Left cardiac atrium (tissue), 4 donors: ENCODE measurements at regions of chr10 and their contacts with region 1.

Region 1: DNA sequence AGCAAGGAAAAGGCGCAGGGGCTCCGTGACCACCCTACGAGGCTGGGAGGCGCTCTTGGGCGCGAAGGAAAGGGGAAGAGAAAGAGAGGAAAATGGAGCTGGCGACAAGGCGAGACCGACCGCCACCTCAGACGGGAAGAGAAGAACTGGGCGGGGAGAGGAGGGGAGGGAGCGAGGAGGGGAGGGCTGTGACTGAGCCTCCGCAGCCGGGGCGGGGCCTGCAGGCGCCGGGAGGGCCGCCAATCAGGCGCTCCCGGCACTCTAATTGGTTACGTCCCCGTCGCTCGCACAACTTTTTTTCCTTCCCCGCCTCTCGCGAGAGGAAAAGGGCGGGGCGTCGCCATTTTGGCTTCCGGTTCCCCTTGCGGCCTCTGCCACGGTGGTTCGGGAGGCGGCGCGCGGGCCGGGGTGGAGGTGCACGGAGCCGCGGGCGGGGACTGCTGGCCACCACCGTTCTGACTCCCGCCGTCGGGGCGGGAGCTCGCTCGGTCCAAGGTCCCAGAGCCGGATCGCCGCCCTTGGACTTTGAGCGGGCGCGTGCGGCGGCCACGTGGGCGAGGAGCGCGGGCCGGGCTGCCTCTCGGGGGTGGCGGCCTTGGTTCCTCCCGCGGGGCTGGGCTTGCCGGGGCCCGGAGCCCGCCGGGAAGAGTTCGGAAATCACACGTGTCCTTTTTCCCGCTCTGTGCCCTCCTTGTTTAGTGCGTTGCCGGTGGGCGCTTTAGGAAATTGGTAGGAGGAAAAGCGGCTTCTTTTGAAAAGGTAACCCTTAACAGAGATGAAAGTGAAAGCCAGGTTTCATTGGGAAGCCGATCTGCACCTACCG is at the start of gene GDI2:
- DNase-seq: peak; percentile 96
- ATAC-seq: peak; percentile 99
- total RNA-seq, gene GDI2: 107 to 120 TPM

Region 2: GRCh38 chr10:5684971-5685763 is 128.3 kb before region 1 on chr10:
- intact Hi-C with region 1: loop called in 1 of 2 experiments (anchors 5 kb)
- DNase-seq: peak; percentile 77
- ATAC-seq: peak; percentile 48 to 68

Region 3: DNA sequence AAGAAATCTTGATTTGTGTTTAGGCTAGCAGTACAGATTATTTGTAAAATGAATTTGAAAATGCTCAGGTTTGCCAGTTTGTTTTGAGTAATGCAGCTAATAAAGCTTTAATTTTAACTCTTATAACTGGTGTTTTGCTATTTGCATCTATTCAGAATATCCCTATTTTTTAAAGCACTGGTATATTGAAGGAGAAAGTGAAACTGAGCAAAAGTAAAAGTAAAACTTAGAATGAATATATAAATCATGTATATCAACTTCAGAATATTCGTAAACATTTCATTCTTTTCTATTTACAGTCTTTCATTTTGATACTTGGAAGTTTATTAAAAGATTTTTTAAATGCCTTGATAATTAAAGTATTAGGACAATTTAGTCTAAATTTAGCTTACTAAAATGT is 102.6 kb before region 1 on chr10:
- intact Hi-C with region 1: no loop called
- DNase-seq: no peak
- ATAC-seq: no peak

Region 4: DNA sequence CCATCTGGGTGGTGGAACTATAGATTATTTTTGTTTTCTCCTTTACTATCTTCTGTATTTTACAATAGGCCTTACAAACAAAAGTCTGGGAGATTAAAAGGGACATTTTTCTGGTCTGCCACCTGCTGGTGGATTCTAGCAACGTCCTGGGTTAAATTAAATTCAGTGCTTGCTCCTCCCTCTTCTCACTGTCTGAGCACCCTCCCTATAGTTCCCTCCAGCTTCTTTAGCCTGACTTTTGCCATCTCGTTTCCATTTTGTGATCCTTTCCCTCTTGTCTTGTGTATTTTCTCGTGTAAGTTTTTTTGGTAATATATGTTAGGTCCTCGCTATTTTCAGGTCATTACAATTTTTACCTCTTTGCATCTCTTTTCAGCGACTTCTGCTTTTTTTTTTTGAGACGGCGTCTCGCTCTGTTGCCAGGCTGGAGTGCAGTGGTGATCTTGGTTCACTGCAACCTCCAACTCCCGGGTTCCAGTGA is 60.1 kb after region 1 on chr10:
- intact Hi-C with region 1: loop called in 1 of 2 experiments (anchors 5 kb)
- DNase-seq: no peak
- ATAC-seq: peak; percentile 75 to 81

Region 5: DNA sequence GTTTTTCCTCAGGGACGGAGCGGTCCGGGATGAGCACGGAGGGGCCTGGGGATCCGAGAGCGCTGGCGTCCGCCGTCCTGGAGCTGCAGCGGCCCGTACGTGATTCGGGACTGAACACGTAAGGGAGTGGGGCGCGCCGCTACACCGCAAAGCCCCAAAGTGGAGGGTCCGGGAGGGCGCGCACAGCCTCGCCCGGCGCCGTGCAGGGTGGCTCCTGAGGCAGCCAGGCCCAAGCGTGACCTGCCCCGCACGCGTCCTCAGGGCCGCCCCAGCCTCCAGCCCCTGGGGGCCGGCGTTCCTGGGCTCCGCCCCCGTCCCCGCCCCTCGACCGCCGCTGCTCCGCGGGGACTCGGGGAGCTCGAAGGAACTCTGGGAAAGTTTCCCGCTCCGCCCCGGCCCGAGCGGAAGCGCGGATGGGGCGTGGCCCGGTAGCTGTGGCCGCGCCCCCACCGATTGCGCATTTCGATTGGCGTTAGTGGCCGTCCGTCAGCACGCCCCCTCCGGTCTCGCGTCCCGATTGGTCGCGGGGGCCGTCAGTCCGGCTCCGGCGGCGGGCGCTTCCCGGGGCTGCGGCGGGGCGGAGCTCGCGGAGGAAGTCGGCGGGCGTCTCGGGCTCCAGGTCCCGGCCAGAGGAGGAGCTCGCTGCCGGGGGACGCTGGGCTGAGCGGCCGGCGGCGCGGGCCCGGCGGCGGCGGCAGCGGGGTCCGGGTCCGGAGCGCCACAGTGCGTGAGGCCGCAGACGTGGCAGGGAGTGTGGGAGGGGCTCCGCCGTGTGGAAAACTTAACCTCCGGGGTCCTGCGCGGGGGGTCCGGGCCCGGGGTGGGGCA is 76.3 kb after region 1 on chr10 and contains the starts of genes ANKRD16 and FBH1:
- intact Hi-C with region 1: loop called in 1 of 2 experiments (anchors 5 kb)
- DNase-seq: peak; percentile 98
- ATAC-seq: peak; percentile 94 to 97
- total RNA-seq, gene ANKRD16: 2.8 to 4.2 TPM
- total RNA-seq, gene FBH1: 67.4 to 85.1 TPM